ENCODE measurements at regions of chr12 and their contacts with region 1.

Region 1: DNA sequence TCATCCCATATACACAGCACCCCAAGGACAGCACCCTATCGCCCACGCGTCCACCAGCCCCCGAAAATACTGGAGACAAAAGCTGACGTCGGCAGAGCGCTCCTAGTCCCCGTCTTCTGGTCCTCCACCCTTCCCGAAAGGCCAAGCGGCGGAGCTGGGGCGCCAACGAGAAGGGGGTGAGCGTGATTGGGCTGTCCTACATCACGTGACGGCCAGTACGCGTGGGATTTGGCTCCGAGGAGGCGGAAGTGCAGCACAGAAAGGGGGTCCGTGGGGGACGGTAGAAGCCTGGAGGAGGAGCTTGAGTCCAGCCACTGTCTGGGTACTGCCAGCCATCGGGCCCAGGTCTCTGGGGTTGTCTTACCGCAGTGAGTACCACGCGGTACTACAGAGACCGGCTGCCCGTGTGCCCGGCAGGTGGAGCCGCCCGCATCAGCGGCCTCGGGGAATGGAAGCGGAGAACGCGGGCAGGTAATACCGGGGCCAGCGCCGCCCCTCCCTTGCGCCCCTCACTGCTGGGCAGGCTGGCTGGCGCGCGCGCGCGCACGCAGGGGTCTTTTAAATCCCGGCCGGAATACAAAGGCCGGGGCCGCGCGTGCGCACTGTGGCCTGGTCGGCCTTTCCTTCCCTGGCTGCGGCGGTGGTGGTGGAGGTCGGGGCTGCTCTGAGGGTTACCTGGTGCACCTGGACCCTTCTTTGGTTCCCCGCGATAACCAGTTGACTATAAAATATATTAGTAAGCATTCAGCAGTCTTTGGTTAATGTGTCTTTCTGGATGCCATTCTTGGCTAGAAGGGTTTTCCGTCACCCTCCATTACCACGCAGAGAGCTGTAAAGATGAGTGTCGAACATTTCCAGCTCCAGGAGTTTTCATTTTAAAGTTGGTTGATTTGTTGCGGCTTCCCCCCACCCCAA is at the start of gene TDG:
- DNase-seq: peak; percentile 94 to 99 (median 97)
- ATAC-seq: peak; percentile 92
- H3K4me3 ChIP-seq: peak within 1 kb of the TSS; percentile 54 to 83
- H3K4me3 Mint-ChIP-seq: peak within 1 kb of the TSS; percentile 96
- H3K27ac ChIP-seq: peak within 1 kb of the TSS; percentile 79 to 92
- H3K27ac Mint-ChIP-seq: peak within 1 kb of the TSS; percentile 99
- H3K4me1 ChIP-seq: peaks cover 41% of the 10 kb centered on the region
- H3K4me1 Mint-ChIP-seq: peaks cover 59% of the 10 kb centered on the region
- H3K27me3 ChIP-seq: no peaks in the 10 kb centered on the region
- H3K27me3 Mint-ChIP-seq: no peaks in the 10 kb centered on the region
- CTCF ChIP-seq: no peak
- total RNA-seq, gene TDG: 30.5 to 36.8 TPM

Region 2: GRCh38 chr12:103840876-103841689 is 124.8 kb before region 1 on chr12 and contains the start of gene NT5DC3:
- CTCF ChIA-PET with region 1: no interaction called
- POLR2A ChIA-PET with region 1: interaction called, 5 read pairs
- intact Hi-C with region 1: loop called (anchors 1 to 5 kb)
- DNase-seq: peak; percentile 66 to 91 (median 82)
- ATAC-seq: peak; percentile 93
- H3K4me3 ChIP-seq: peak within 1 kb of the TSS; percentile 64 to 68
- H3K4me3 Mint-ChIP-seq: peak within 1 kb of the TSS; percentile 85
- H3K27ac ChIP-seq: peak within 1 kb of the TSS; percentile 36 to 40
- H3K27ac Mint-ChIP-seq: peak within 1 kb of the TSS; percentile 74
- H3K4me1 ChIP-seq: peaks cover 11% of the 10 kb centered on the region
- H3K4me1 Mint-ChIP-seq: peaks cover 18% of the 10 kb centered on the region
- H3K27me3 ChIP-seq: no peaks in the 10 kb centered on the region
- H3K27me3 Mint-ChIP-seq: no peaks in the 10 kb centered on the region
- CTCF ChIP-seq: no peak
- total RNA-seq, gene NT5DC3: 4.3 to 5.6 TPM

Region 3: GRCh38 chr12:103901518-103902173 is 64.2 kb before region 1 on chr12:
- CTCF ChIA-PET with region 1: no interaction called
- POLR2A ChIA-PET with region 1: interaction called, 17 read pairs
- intact Hi-C with region 1: no loop called
- DNase-seq: peak; percentile 22 to 81 (median 59)
- ATAC-seq: peak; percentile 96
- H3K4me3 ChIP-seq: peak overlapping the region; percentile 6 to 53
- H3K4me3 Mint-ChIP-seq: peak overlapping the region; percentile 76
- H3K27ac ChIP-seq: peak overlapping the region; percentile 28 to 54
- H3K27ac Mint-ChIP-seq: peak overlapping the region; percentile 94
- H3K4me1 ChIP-seq: peaks cover 56% of the 10 kb centered on the region
- H3K4me1 Mint-ChIP-seq: peaks cover 69% of the 10 kb centered on the region
- H3K27me3 ChIP-seq: no peaks in the 10 kb centered on the region
- H3K27me3 Mint-ChIP-seq: no peaks in the 10 kb centered on the region
- CTCF ChIP-seq: no peak

Region 4: DNA sequence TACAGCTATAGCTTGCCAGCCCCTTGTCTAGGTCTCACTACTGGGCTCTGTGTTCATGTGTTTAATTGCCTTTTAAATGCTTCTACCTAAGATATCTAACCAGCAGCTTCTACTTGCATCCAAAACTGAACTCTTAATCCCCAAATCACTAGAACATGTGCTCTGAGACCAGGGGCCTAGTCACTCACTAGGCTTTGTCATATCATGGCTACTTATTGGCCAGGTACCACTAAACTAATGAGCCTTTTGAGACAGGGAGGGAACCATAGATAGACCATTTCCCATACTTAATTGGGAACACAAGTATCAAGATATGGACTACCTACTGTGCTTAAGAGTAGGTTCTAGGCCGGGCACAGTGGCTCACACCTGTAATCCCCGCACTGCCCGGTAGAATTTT is 29.2 kb before region 1 on chr12:
- CTCF ChIA-PET with region 1: no interaction called
- POLR2A ChIA-PET with region 1: interaction called, 11 read pairs
- intact Hi-C with region 1: no loop called
- DNase-seq: no peak
- ATAC-seq: no peak
- H3K4me3 ChIP-seq: no peak overlapping the region
- H3K4me3 Mint-ChIP-seq: no peak overlapping the region
- H3K27ac ChIP-seq: no peak overlapping the region
- H3K27ac Mint-ChIP-seq: peak overlapping the region; percentile 71
- H3K4me1 ChIP-seq: peaks cover 32% of the 10 kb centered on the region
- H3K4me1 Mint-ChIP-seq: peaks cover 63% of the 10 kb centered on the region
- H3K27me3 ChIP-seq: no peaks in the 10 kb centered on the region
- H3K27me3 Mint-ChIP-seq: no peaks in the 10 kb centered on the region
- CTCF ChIP-seq: no peak

Region 5: DNA sequence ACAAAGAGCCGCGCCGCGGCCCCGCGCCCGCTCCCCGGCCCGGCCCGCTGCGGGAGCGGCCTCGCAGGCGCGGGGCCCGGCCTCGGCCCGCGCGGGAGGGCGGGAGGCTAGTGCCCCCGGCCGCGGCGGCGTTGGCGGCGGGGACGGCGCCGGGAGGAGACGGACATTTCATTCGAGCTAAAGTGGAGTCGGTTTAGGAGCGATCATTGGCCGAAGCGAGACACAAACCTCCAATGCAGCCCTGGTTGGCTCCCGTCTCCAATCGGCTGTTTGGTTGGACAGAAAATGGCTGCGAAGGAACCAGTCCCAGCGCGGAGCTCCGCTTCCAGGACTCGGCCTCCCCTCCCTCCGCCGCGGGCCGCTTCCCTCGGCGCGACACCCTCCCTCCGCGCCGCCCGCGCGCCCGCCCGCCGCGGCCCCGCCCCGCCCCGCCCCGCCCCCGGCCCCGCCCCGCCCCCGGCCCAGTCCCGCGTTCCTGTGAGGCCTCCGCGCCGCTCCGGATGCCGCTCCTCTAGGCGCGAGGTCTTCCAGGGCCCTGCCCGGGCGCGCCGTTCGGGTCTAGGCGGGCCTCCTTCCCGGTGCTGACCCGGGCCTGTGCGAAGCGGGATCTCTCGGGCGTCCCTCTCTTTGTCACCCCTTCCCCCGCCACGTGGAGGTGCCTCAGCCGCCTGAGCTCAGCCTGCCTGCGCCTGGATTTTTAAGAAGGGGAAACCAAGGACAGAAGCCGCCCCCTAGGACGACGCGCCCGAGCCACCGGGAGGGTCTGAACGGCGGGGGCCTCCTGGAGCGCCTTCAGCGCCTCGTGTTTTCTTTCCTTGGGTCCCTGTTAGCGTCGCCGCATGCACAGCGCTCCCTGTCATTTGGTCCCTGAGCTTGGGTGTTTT is 172.3 kb after region 1 on chr12 and contains the start of gene NFYB:
- CTCF ChIA-PET with region 1: no interaction called
- POLR2A ChIA-PET with region 1: interaction called, 14 read pairs
- intact Hi-C with region 1: loop called (anchors 5 kb)
- DNase-seq: peak; percentile 82 to 98 (median 90)
- ATAC-seq: peak; percentile 95
- H3K4me3 ChIP-seq: peak within 1 kb of the TSS; percentile 63 to 71
- H3K4me3 Mint-ChIP-seq: peak within 1 kb of the TSS; percentile 92
- H3K27ac ChIP-seq: peak within 1 kb of the TSS; percentile 57 to 58
- H3K27ac Mint-ChIP-seq: peak within 1 kb of the TSS; percentile 87
- H3K4me1 ChIP-seq: peaks cover 31% of the 10 kb centered on the region
- H3K4me1 Mint-ChIP-seq: peaks cover 16% of the 10 kb centered on the region
- H3K27me3 ChIP-seq: no peaks in the 10 kb centered on the region
- H3K27me3 Mint-ChIP-seq: no peaks in the 10 kb centered on the region
- CTCF ChIP-seq: no peak
- total RNA-seq, gene NFYB: 9.1 to 11.2 TPM

Region 6: GRCh38 chr12:104958009-104958945 is 992.4 kb after region 1 on chr12 and contains the start of gene SLC41A2:
- CTCF ChIA-PET with region 1: no interaction called
- POLR2A ChIA-PET with region 1: no interaction called
- intact Hi-C with region 1: loop called in 1 of 2 experiments (anchors 5 kb)
- DNase-seq: peak; percentile 52 to 90 (median 76)
- ATAC-seq: peak; percentile 90
- H3K4me3 ChIP-seq: peak within 1 kb of the TSS; percentile 61 to 97
- H3K4me3 Mint-ChIP-seq: peak within 1 kb of the TSS; percentile 94
- H3K27ac ChIP-seq: peak within 1 kb of the TSS; percentile 40 to 42
- H3K27ac Mint-ChIP-seq: peak within 1 kb of the TSS; percentile 85
- H3K4me1 ChIP-seq: peaks cover 13% of the 10 kb centered on the region
- H3K4me1 Mint-ChIP-seq: peaks cover 19% of the 10 kb centered on the region
- H3K27me3 ChIP-seq: no peaks in the 10 kb centered on the region
- H3K27me3 Mint-ChIP-seq: peaks cover 17% of the 10 kb centered on the region
- CTCF ChIP-seq: no peak
- total RNA-seq, gene SLC41A2: 3.4 to 4.2 TPM

Measured in CD8-positive, alpha-beta T cell (primary cell).